A673 (cell line): ENCODE measurements at regions of chrX and their contacts with region 1.

Region 1: GRCh38 chrX:72540318-72540717 is 32.3 kb downstream of the HDAC8 start:
- DNase-seq: peak; percentile 40
- H3K4me3 ChIP-seq: no peak overlapping the region
- H3K27ac ChIP-seq: no peak overlapping the region
- H3K4me1 ChIP-seq: no peaks in the 10 kb centered on the region
- H3K27me3 ChIP-seq: no peaks in the 10 kb centered on the region
- CTCF ChIP-seq: peak; percentile 56

Region 2: GRCh38 chrX:72045552-72046277 is 494.6 kb before region 1 on chrX:
- CTCF ChIA-PET with region 1: no interaction called
- POLR2A ChIA-PET with region 1: no interaction called
- intact Hi-C with region 1: no loop called
- DNase-seq: peak; percentile 19
- H3K4me3 ChIP-seq: no peak overlapping the region
- H3K27ac ChIP-seq: no peak overlapping the region
- H3K4me1 ChIP-seq: peaks cover 15% of the 10 kb centered on the region
- H3K27me3 ChIP-seq: no peaks in the 10 kb centered on the region
- CTCF ChIP-seq: no peak

Region 3: DNA sequence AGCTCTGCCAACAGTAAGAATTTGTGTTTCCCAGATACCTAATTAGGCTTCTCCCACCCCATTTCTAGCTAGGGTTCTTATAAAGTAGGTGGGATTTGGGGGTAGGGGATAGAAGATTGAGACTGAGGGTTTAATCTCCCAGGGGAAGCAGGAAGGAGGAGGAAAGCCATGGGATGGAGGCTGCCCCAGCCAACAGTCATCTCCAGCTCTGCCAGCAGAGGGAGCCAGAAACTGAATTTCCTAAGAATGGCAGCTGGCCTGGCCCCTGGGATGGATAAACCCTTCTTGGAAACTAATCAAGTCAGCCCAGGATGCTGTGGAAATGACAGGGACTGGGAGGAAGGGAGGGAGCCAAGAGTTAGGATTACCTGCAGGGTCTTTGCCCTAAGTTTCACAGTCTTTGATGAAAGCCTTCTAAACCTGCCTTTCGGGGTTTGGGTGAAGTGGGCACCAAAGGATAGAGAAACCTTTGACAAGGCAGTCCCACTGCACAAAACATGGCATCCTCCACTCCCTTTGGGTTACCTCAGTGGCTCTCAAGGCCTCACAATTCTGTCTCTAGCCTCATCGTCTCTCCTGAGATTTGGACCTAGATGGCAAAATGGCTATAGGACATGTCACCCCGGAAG is 294.7 kb before region 1 on chrX:
- CTCF ChIA-PET with region 1: interaction called, 5 read pairs
- POLR2A ChIA-PET with region 1: no interaction called
- intact Hi-C with region 1: loop called (anchors 2 kb)
- DNase-seq: peak; percentile 82
- H3K4me3 ChIP-seq: no peak overlapping the region
- H3K27ac ChIP-seq: no peak overlapping the region
- H3K4me1 ChIP-seq: peaks cover 12% of the 10 kb centered on the region
- H3K27me3 ChIP-seq: no peaks in the 10 kb centered on the region
- CTCF ChIP-seq: peak; percentile 89

Region 4: DNA sequence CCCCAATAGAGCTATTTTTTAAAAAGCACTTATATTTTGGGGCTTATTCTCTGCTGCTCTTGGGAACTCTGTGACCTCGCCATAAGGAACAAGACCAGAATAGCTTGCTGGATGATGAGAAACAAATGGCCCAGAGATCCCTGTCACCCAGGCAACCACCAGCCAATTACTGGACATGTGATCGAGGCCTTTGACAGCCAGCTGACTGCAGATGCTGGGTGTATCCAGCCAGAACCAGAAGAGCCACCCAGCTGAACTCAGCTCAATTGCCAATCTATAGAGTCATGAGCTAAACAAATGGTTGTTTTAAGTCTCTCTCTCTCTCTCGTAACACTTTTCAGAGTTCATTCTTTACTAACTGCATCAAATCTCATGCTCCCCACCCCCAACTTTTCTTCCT is 210.2 kb before region 1 on chrX:
- CTCF ChIA-PET with region 1: no interaction called
- POLR2A ChIA-PET with region 1: no interaction called
- intact Hi-C with region 1: no loop called
- DNase-seq: no peak
- H3K4me3 ChIP-seq: no peak overlapping the region
- H3K27ac ChIP-seq: no peak overlapping the region
- H3K4me1 ChIP-seq: no peaks in the 10 kb centered on the region
- H3K27me3 ChIP-seq: peaks cover 3% of the 10 kb centered on the region
- CTCF ChIP-seq: no peak